Naive thymus-derived CD8-positive, alpha-beta T cell (primary cell): ENCODE measurements at regions of chr19 and their contacts with region 1.

Region 1: DNA sequence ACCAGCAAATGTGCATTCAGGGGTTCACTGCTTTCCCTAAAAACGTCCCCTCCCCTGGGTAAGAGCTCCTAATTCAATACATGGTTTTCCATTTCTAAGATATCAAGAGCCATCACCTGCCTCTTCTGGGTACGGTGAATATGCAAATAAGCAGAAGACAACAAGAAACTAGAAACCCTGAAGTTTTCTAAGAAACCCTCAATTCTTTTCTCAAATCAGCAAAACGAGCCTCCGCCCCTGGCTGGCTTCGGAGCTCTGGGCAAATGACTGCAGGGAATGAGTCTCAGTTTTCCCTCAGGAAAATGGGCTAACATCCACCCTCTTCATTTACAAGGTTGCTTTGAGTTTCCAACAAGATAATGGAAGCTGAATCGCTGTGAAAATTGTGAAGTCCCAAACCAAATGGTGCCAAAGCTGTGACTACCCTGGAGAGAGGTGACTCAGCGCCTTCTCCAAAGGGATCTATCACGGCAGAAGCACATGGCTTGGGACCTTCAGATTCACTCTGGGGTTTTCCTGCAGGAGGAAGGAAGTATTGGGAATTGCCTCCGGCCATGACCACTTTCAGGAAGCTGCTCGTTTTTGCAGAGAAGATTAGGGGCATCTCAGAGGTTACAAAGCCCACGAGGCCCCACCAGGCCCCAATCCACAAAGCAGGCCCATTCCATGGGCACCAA is 26.6 kb downstream of the KLF2 start:
- DNase-seq: no peak
- ATAC-seq: no peak
- H3K4me3 Mint-ChIP-seq: peak overlapping the region in 3 of 10 donors; percentile 26 to 33 (median 32)
- H3K27ac Mint-ChIP-seq: peak overlapping the region in 6 of 10 donors; percentile 19 to 81 (median 56)
- H3K4me1 Mint-ChIP-seq: peaks cover 10 to 58% (median 43%) of the 10 kb centered on the region in 4 donors
- H3K27me3 Mint-ChIP-seq: no peaks in the 10 kb centered on the region

Region 2: GRCh38 chr19:16371540-16371986 is 20.3 kb after region 1 on chr19:
- POLR2A ChIA-PET with region 1: interaction called, 4,622 read pairs
- DNase-seq: peak; percentile 77 to 97 (median 94)
- ATAC-seq: peak; percentile 41 to 59
- H3K4me3 Mint-ChIP-seq: no peak overlapping the region
- H3K27ac Mint-ChIP-seq: no peak overlapping the region
- H3K4me1 Mint-ChIP-seq: peaks cover 0 to 54% (median 20%) of the 10 kb centered on the region in 4 donors
- H3K27me3 Mint-ChIP-seq: peaks cover 0 to 2% (median 0%) of the 10 kb centered on the region in 5 donors